Left ventricle myocardium superior (tissue), 1 donor: ENCODE measurements at regions of chr20 and their contacts with region 1.

Region 1: DNA sequence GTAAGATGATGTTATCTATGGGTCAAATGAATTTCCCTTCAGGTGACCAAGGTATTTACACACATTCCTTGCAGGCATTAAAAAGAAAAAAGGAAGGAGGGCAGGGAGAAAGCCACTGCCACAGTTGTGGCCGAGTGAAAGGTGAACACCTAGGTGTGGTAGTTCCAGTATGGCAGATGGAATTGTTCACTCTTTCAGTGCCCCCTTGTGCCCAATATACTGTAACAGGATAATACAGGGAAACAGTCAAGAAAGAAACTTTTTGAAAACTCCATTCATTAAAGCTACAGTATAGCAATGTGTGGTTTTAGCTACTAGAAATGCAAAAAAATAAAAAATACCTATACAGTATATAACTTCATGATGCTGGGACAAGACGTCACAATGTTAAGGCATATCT is 52.1 kb downstream of the BMP2 start:
- DNase-seq: no peak
- ATAC-seq: no peak

Region 2: DNA sequence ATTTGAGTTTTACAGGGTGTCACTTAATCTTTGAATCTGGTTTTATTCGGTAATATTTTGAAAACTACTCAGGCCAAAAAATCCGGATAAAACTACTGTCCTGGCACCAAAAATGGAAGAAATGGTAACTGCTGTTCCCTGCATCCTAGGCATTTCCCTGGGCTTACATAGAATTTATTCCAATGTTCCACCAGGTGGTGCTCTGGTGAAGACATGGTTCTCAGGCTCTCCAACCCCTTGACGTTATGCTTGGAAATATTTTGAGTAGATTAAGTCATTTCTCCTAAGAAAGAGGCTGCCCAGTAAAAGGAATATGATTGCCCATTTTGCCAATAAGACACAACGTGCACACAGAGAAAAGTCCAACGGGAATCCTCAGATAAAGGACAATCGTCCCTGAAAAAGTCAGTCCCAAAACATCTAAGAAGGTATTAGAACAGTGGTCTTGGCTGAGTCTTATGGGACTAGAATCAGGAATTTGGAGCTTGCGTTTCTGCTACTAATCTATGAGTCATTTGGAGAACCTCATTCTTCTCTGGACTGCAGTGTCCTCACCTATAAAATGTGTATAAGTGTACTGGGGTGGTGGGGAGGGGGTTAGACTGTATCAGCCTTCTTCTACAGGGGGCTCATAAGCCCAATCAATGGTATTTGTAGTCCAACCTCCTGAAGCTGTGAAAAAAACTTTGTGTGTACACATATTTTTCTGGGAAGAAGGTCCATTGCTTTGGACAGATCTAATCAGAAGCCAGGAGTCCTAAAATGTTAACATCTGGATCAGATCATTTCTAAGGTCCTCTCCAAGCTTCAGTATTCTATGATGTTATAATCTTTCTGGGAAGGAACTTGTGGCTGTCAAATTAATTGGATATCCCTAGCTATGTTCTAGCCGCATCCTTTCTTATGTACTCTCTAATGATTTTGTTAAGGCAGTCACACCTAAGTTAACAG is 183.1 kb before region 1 on chr20:
- intact Hi-C with region 1: loop called (anchors 5 kb)
- DNase-seq: no peak
- ATAC-seq: peak; percentile 91

Region 3: GRCh38 chr20:6769903-6770785 is 49.5 kb before region 1 on chr20:
- intact Hi-C with region 1: no loop called
- DNase-seq: peak; percentile 56
- ATAC-seq: peak; percentile 12

Region 4: GRCh38 chr20:6863798-6864201 is 44.2 kb after region 1 on chr20:
- intact Hi-C with region 1: no loop called
- DNase-seq: no peak
- ATAC-seq: no peak